Head of caudate nucleus (tissue), 42 donors: ENCODE measurements at regions of chr14 and their contacts with region 1.

Region 1: GRCh38 chr14:69027242-69027913 is 48.3 kb upstream of the ACTN1 start:
- DNase-seq: no peak

Region 2: DNA sequence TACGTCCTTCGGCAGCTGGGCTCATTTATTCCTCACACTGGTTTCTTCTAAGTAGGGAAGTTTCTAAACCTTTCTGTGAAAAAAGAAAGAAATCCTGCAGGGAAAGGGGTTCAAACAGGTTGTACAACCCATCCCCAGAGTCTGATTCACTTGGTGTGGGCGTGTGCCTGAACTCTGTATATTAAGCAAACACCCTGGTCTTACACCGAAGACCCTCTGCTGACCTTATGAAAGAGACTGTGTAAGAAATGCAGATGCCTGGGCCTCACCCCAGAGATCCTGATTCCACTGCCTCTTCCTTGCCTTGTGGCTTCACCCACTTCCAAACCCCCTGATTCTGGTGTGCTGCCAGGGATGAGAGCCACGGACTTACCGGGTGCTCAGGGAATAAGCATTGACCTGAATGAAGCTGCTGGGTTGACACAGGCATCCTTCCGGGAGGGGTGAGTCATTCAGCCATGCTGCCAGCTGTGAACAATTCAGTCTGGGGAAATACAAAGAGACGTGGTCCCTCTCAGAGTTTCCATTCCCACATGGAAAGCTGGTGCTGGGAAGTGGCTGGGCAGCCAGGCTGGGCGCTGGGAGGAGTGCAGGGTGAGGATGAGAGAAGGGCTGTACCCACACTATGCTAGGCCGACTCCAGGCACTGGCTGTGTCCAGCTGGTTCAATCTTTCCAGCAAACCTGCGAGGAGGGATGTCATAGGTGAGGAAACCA is 21.8 kb before region 1 on chr14:
- intact Hi-C with region 1: loop called (anchors 1 kb)
- DNase-seq: peak in 24 of 42 donors; percentile 9 to 77 (median 40)